B cell (primary cell): ENCODE measurements at regions of chr5 and their contacts with region 1.

Region 1: GRCh38 chr5:103119765-103120606 is at the starts of genes GIN1 and PPIP5K2:
- DNase-seq: peak; percentile 98
- ATAC-seq: peak; percentile 91
- H3K4me3 ChIP-seq: peak within 1 kb of the TSS; percentile 77 to 96 (median 91)
- H3K4me3 Mint-ChIP-seq: peak within 1 kb of the TSS; percentile 93
- H3K27ac ChIP-seq: peak within 1 kb of the TSS; percentile 92 to 96
- H3K27ac Mint-ChIP-seq: peak within 1 kb of the TSS; percentile 98
- H3K4me1 ChIP-seq: peaks cover 13 to 30% of the 10 kb centered on the region in 2 donors
- H3K4me1 Mint-ChIP-seq: peaks cover 49% of the 10 kb centered on the region
- H3K27me3 ChIP-seq: no peaks in the 10 kb centered on the region
- H3K27me3 Mint-ChIP-seq: no peaks in the 10 kb centered on the region
- CTCF ChIP-seq: no peak
- total RNA-seq, gene GIN1: 12.6 and 16.9 TPM in 2 replicates
- total RNA-seq, gene PPIP5K2: 77.9 and 80.5 TPM in 2 replicates

Region 2: DNA sequence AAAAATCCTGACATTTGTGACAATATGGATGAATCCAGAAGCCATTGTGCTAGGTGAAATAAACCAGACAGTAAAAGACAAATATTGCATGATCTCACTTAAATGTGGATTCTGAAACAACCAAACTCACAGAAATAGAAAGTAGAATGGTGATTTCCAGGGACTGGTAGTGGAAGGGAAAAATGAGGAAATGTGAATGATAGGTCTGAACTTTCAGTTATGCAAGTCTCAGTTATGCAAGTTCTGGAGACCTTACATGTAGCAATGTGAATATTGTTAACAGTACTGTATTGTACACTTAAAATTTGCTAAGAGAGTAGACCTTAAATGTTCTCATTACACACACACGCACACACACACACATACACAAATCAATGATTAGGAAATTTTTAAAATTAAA is 908.8 kb before region 1 on chr5:
- CTCF ChIA-PET with region 1: no interaction called
- POLR2A ChIA-PET with region 1: no interaction called
- intact Hi-C with region 1: no loop called
- DNase-seq: no peak
- ATAC-seq: no peak
- H3K4me3 ChIP-seq: no peak overlapping the region
- H3K4me3 Mint-ChIP-seq: no peak overlapping the region
- H3K27ac ChIP-seq: no peak overlapping the region
- H3K27ac Mint-ChIP-seq: no peak overlapping the region
- H3K4me1 ChIP-seq: no peaks in the 10 kb centered on the region
- H3K4me1 Mint-ChIP-seq: no peaks in the 10 kb centered on the region
- H3K27me3 ChIP-seq: no peaks in the 10 kb centered on the region
- H3K27me3 Mint-ChIP-seq: no peaks in the 10 kb centered on the region
- CTCF ChIP-seq: no peak

Region 3: GRCh38 chr5:102754767-102755431 is 365.1 kb before region 1 on chr5 and contains the start of gene PAM:
- CTCF ChIA-PET with region 1: interaction called, 7 read pairs
- POLR2A ChIA-PET with region 1: interaction called, 7 read pairs
- intact Hi-C with region 1: loop called (anchors 1 kb)
- DNase-seq: peak; percentile 74
- ATAC-seq: peak; percentile 67
- H3K4me3 ChIP-seq: peak within 1 kb of the TSS; percentile 57 to 74 (median 69)
- H3K4me3 Mint-ChIP-seq: peak within 1 kb of the TSS; percentile 97
- H3K27ac ChIP-seq: peak within 1 kb of the TSS; percentile 29 to 55
- H3K27ac Mint-ChIP-seq: peak within 1 kb of the TSS; percentile 91
- H3K4me1 ChIP-seq: peaks cover 16 to 23% of the 10 kb centered on the region in 2 donors
- H3K4me1 Mint-ChIP-seq: peaks cover 26% of the 10 kb centered on the region
- H3K27me3 ChIP-seq: peaks cover 0 to 24% (median 7%) of the 10 kb centered on the region in 4 experiments
- H3K27me3 Mint-ChIP-seq: peaks cover 19% of the 10 kb centered on the region
- CTCF ChIP-seq: no peak
- total RNA-seq, gene PAM: 34.8 and 37.2 TPM in 2 replicates

Region 4: GRCh38 chr5:103562453-103563157 is 442.6 kb after region 1 on chr5 and contains the start of gene NUDT12:
- CTCF ChIA-PET with region 1: no interaction called
- POLR2A ChIA-PET with region 1: no interaction called
- intact Hi-C with region 1: loop called (anchors 10 kb)
- DNase-seq: peak; percentile 69
- ATAC-seq: peak; percentile 88
- H3K4me3 ChIP-seq: peak within 1 kb of the TSS; percentile 56 to 69 (median 62)
- H3K4me3 Mint-ChIP-seq: peak within 1 kb of the TSS; percentile 98
- H3K27ac ChIP-seq: peak within 1 kb of the TSS in 1 of 2 donors; percentile 68
- H3K27ac Mint-ChIP-seq: peak within 1 kb of the TSS; percentile 89
- H3K4me1 ChIP-seq: peaks cover 8 to 9% of the 10 kb centered on the region in 2 donors
- H3K4me1 Mint-ChIP-seq: peaks cover 17% of the 10 kb centered on the region
- H3K27me3 ChIP-seq: no peaks in the 10 kb centered on the region
- H3K27me3 Mint-ChIP-seq: peaks cover 7% of the 10 kb centered on the region
- CTCF ChIP-seq: no peak
- total RNA-seq, gene NUDT12: 2.6 and 3.5 TPM in 2 replicates